AG04450 (cell line): ENCODE measurements at regions of chr6 and their contacts with region 1.

Region 1: DNA sequence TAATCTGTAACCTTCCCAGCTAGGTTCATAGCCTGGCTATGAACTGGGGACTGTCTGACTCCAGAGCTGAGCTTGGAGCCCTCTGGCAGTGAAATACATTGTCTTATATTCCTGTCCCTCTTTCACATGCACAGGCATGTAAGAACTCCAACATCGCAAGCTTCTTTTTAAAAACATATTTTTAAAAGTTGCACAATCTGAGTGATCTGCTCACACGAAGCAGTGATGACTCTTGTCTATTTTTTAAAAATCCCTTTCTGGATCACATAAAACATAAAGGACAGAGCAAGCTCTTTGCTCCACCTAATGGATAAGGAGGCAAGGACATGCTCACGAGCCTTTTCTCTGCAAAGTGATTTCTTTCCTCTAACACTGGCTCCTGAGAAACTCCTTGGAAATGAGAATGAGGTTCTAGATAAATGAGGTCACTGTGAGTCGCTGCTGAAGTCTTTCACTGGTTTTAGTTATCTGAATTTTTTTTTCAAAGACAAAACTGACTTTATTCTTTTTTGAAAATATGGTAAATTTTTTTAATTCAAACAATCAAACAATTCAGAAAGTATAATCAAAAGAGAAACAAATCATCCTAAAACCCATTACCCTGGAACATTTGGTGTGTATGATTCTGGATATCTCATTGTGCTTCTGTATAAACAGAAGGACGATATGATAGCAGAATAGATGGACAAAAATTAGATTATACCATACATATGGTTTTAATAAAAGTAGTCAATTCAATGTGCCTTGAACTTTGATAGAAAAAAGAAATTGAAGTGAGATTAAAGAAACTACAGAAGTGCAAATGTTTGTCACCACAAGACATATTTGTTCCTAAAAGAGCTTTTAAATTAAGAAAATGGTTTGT is 30.8 kb downstream of the IL20RA start:
- DNase-seq: peak; percentile 15
- H3K4me3 ChIP-seq: no peak overlapping the region
- H3K27ac ChIP-seq: no peak overlapping the region
- H3K27me3 ChIP-seq: peaks cover 10% of the 10 kb centered on the region
- CTCF ChIP-seq: peak; percentile 66

Region 2: GRCh38 chr6:136822376-136823127 is 191.4 kb before region 1 on chr6 and contains the start of gene PEX7:
- CTCF ChIA-PET with region 1: interaction called, 12 read pairs
- POLR2A ChIA-PET with region 1: no interaction called
- DNase-seq: peak; percentile 72
- H3K4me3 ChIP-seq: peak within 1 kb of the TSS; percentile 86
- H3K27ac ChIP-seq: peak within 1 kb of the TSS; percentile 60
- H3K27me3 ChIP-seq: peaks cover 3% of the 10 kb centered on the region
- CTCF ChIP-seq: peak; percentile 80
- polyA plus RNA-seq, gene PEX7: 6.7 and 8.9 TPM in 2 replicates

Region 3: DNA sequence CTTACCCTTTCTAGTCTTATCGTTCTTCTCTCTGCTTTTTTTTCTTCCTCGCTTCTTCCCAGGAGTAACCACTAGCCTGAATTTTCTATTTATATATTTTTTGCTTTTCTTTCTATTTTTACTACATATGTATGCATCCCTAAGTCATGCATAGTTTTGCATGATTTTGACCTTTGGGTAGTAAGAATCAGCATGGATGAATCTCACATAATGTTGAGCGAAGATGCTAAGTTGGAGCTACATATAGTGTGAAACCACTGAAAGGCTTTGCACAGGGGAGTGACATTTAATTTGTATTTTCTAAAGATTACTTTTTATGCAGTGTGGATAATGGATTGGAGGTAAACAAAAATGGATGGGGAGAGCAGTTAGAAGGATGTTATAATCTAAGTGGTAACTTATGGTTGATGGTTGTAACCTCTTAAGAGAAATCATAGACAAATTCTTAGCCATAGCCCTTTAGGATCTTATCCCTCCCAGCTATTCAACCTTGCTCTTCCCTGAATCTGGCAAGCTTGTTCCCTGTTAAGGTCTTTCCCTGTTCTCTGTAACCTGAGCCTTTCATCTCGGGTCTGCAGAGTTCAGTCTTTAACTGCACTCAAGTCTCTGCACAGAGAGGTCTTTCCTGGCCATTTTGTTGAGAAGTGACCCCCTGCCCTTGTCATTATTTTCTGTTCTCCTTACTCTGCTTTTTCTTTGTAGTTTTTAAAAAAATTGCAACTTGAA is 173.5 kb before region 1 on chr6:
- CTCF ChIA-PET with region 1: interaction called, 27 read pairs
- POLR2A ChIA-PET with region 1: no interaction called
- DNase-seq: no peak
- H3K4me3 ChIP-seq: no peak overlapping the region
- H3K27ac ChIP-seq: no peak overlapping the region
- H3K27me3 ChIP-seq: no peaks in the 10 kb centered on the region
- CTCF ChIP-seq: no peak

Region 4: DNA sequence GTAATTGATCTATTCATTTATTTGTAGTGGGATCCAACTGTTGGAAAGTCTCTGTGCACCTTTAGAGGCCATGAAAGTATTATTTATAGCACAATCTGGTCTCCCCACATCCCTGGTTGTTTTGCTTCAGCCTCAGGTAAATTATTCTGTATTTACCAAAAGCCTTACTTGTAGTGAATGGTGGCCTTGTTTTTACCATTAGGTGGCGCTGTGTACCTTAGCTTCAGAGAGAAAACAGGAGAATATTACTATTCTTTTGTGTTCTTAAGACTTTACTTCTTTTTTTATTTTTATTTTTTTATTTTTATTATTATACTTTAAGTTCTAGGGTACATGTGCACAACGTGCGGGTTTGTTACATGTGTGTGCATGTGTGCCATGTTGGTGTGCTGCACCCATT is 167.9 kb before region 1 on chr6:
- CTCF ChIA-PET with region 1: interaction called, 27 read pairs
- POLR2A ChIA-PET with region 1: no interaction called
- DNase-seq: peak; percentile 39
- H3K4me3 ChIP-seq: no peak overlapping the region
- H3K27ac ChIP-seq: no peak overlapping the region
- H3K27me3 ChIP-seq: no peaks in the 10 kb centered on the region
- CTCF ChIP-seq: peak; percentile 81